Activated CD4-positive, alpha-beta T cell treated with anti-CD3 and anti-CD28 coated beads for 36 hours (primary cell): ENCODE measurements at regions of chr20 and their contacts with region 1.

Region 1: DNA sequence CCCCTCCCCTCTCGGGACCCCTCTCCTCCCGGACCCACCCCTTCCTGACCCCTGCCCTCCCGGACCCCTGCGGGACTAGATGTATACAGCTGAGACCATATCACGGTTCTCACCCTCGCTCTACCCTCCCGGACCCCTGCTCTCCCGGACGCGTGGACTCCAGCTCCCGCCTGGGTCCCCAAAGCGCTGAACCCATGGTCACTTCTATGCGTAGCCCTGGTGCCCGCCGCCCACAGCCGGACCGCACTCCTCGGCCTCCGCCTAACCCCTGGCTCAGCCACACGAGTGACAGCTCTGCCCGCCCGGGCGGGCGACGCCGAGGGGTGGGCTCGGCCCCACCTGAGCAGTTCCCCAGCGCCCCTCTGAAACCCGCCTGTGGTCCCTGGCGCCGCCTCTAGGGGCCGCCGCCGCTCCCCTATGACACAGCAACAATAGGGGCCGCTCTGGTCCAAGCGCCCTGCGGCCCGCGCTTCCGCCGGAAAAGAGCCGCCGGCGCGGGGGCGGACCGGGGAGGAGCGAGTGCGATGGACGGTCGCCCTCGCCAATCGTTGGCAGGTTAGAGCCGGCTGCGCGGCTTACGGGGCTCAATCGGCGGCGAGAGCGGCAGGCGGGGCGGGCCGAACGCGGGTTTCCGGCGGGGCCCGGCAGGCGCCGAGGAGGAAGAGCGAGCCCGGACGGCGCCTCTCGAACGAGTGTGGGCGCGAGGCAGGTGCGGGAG is at the start of gene ADRM1:
- DNase-seq: peak; percentile 98
- ATAC-seq: peak; percentile 83
- H3K4me3 Mint-ChIP-seq: peak within 1 kb of the TSS; percentile 91
- H3K27ac Mint-ChIP-seq: peak within 1 kb of the TSS; percentile 99
- H3K4me1 Mint-ChIP-seq: peaks cover 22% of the 10 kb centered on the region
- H3K27me3 Mint-ChIP-seq: no peaks in the 10 kb centered on the region
- total RNA-seq, gene ADRM1: 92.8 to 103 TPM

Region 2: GRCh38 chr20:62129731-62130531 is 172.6 kb before region 1 on chr20:
- CTCF ChIA-PET with region 1: no interaction called
- POLR2A ChIA-PET with region 1: no interaction called
- intact Hi-C with region 1: no loop called
- DNase-seq: no peak
- ATAC-seq: no peak
- H3K4me3 Mint-ChIP-seq: no peak overlapping the region
- H3K27ac Mint-ChIP-seq: no peak overlapping the region
- H3K4me1 Mint-ChIP-seq: peaks cover 23% of the 10 kb centered on the region
- H3K27me3 Mint-ChIP-seq: no peaks in the 10 kb centered on the region

Region 3: DNA sequence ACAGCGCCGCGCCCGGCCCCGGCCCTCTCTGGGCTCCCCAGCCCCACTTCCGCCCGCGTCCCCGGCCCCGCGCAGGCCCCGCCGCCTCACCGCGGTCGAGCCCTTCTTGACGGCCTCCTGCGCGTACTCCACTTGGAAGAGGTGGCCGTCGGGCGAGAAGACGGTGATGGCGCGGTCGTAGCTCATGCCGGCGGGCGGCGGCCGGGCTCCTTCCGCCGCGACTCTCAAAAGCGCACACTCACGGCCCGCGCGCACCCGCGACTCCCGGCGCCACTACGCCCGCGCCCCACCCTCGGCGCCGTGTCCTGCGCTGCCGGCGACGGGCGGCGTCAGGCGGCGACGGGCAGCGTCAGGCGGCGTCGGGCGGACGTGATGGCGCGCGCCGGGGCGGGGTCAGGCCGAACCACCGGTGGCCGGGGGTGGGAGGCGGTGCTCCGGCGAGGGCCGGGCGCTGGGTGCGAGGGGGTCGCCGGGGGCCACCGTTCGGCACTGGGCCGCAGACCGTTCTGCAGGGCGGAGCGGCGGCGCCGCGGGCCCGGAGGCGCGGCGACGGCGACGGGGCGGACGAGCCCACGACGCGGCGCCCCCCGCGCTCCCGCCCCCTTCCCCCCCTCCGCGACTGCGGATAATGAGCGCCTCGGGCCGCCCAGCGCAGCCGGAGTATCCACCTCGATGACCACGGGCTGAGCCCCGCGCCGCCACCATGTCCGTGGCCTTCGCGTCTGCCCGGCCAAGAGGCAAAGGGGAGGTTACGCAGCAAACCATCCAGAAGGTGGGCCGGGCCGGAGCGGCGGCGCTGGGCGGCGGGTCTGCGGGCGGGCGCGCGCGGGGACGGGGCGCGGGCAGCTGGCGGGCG is 159.2 kb before region 1 on chr20 and contains the starts of genes PSMA7 and SS18L1:
- CTCF ChIA-PET with region 1: no interaction called
- POLR2A ChIA-PET with region 1: no interaction called
- intact Hi-C with region 1: loop called in 1 of 2 experiments (anchors 1 kb)
- DNase-seq: peak; percentile 92
- ATAC-seq: peak; percentile 87
- H3K4me3 Mint-ChIP-seq: peak within 1 kb of the TSS; percentile 89
- H3K27ac Mint-ChIP-seq: peak within 1 kb of the TSS; percentile 91
- H3K4me1 Mint-ChIP-seq: peaks cover 61% of the 10 kb centered on the region
- H3K27me3 Mint-ChIP-seq: no peaks in the 10 kb centered on the region
- total RNA-seq, gene PSMA7: 208 to 296 TPM
- total RNA-seq, gene SS18L1: 14.3 to 16.6 TPM

Region 4: GRCh38 chr20:62326959-62327725 is 24.6 kb after region 1 on chr20:
- CTCF ChIA-PET with region 1: no interaction called
- POLR2A ChIA-PET with region 1: no interaction called
- intact Hi-C with region 1: no loop called
- DNase-seq: no peak
- ATAC-seq: no peak
- H3K4me3 Mint-ChIP-seq: no peak overlapping the region
- H3K27ac Mint-ChIP-seq: no peak overlapping the region
- H3K4me1 Mint-ChIP-seq: no peaks in the 10 kb centered on the region
- H3K27me3 Mint-ChIP-seq: no peaks in the 10 kb centered on the region

Region 5: GRCh38 chr20:62368976-62369814 is 66.7 kb after region 1 on chr20:
- CTCF ChIA-PET with region 1: interaction called, 4 read pairs
- POLR2A ChIA-PET with region 1: no interaction called
- intact Hi-C with region 1: loop called in 1 of 2 experiments (anchors 5 kb)
- DNase-seq: peak; percentile 37
- ATAC-seq: peak; percentile 9
- H3K4me3 Mint-ChIP-seq: no peak overlapping the region
- H3K27ac Mint-ChIP-seq: no peak overlapping the region
- H3K4me1 Mint-ChIP-seq: peaks cover 3% of the 10 kb centered on the region
- H3K27me3 Mint-ChIP-seq: peaks cover 19% of the 10 kb centered on the region

Region 6: DNA sequence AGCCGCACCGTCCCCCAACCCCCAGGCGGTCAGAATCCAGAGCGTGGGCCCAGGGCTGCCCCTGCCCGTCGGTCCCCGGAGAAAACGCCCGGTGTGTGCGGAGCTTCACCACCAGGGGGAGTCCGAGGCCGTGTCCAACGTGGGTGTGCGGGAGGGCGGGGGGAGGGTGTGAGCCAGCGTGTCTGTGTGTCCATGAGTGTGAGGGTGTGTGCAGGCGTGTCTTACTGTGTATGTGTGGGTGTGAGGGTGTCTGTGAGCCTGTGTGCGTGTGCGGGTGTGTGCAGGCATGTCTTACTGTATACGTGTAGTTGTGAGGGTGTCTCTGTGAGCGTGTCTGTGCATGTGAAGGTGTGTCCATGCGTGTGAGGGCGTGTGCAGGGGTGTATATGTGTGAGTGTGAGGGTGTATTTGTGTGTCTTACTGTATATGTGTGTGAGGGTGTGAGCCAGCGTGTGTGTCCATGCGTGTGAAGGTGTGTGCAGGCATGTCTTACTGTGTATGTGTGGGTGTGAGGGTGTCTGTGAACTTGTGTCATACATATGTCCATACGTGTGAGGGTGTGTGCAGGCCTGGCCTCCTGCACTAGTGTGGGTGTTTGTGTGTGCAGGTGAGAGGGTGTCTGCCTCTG is 197.9 kb after region 1 on chr20:
- CTCF ChIA-PET with region 1: no interaction called
- POLR2A ChIA-PET with region 1: no interaction called
- intact Hi-C with region 1: loop called (anchors 1 to 5 kb)
- DNase-seq: peak; percentile 91
- ATAC-seq: peak; percentile 14
- H3K4me3 Mint-ChIP-seq: no peak overlapping the region
- H3K27ac Mint-ChIP-seq: peak overlapping the region; percentile 82
- H3K4me1 Mint-ChIP-seq: peaks cover 32% of the 10 kb centered on the region
- H3K27me3 Mint-ChIP-seq: peaks cover 1% of the 10 kb centered on the region

Region 7: GRCh38 chr20:62516345-62516744 is 213.8 kb after region 1 on chr20:
- CTCF ChIA-PET with region 1: no interaction called
- POLR2A ChIA-PET with region 1: no interaction called
- intact Hi-C with region 1: no loop called
- DNase-seq: no peak
- ATAC-seq: no peak
- H3K4me3 Mint-ChIP-seq: no peak overlapping the region
- H3K27ac Mint-ChIP-seq: no peak overlapping the region
- H3K4me1 Mint-ChIP-seq: peaks cover 4% of the 10 kb centered on the region
- H3K27me3 Mint-ChIP-seq: peaks cover 19% of the 10 kb centered on the region

Region 8: DNA sequence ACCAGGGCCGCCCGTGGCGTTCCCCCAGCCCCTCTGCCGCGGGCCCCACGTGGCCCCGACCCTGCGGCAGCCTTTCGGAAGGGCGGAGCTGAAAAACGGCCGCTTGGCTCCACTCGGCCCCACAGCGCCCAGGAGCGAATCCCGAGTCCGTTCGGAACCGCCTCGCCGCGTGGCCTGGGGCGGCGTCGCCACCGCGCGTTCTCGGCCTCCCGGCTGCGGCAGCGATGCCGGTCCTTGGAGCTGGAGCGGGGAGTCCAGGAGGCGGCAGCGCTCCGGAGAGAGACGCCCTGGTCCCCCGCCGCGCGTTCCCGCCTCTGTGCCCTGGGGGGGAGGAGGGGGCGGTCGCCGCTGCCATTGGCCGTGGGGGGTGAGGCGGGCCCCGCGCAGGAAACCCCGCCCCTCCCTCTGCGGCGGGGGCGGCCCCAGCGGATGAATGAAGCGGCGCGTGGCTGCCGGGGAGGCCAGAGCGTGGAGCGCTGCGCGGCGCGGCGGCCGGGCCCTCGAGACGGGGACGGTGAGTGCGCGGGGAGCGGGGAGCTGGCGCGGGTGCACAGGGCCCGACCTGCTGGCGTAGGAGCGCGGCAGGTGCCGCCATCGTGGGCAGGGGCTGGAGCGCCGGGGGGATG is 339.7 kb after region 1 on chr20 and contains the start of gene SLCO4A1:
- CTCF ChIA-PET with region 1: no interaction called
- POLR2A ChIA-PET with region 1: no interaction called
- intact Hi-C with region 1: loop called (anchors 1 to 10 kb)
- DNase-seq: peak; percentile 93
- ATAC-seq: peak; percentile 94
- H3K4me3 Mint-ChIP-seq: peak within 1 kb of the TSS; percentile 79
- H3K27ac Mint-ChIP-seq: peak within 1 kb of the TSS; percentile 69
- H3K4me1 Mint-ChIP-seq: peaks cover 11% of the 10 kb centered on the region
- H3K27me3 Mint-ChIP-seq: peaks cover 4% of the 10 kb centered on the region
- total RNA-seq, gene SLCO4A1: 40.5 to 43.4 TPM

Region 9: GRCh38 chr20:62926239-62927104 is 624.0 kb after region 1 on chr20 and contains the start of gene DIDO1:
- CTCF ChIA-PET with region 1: no interaction called
- POLR2A ChIA-PET with region 1: no interaction called
- intact Hi-C with region 1: loop called in 1 of 2 experiments (anchors 2 kb)
- DNase-seq: peak; percentile 94
- ATAC-seq: peak; percentile 78
- H3K4me3 Mint-ChIP-seq: peak within 1 kb of the TSS; percentile 94
- H3K27ac Mint-ChIP-seq: peak within 1 kb of the TSS; percentile 96
- H3K4me1 Mint-ChIP-seq: peaks cover 64% of the 10 kb centered on the region
- H3K27me3 Mint-ChIP-seq: no peaks in the 10 kb centered on the region
- total RNA-seq, gene DIDO1: 43.7 to 49.7 TPM

Region 10: GRCh38 chr20:63272584-63273579 is 970.4 kb after region 1 on chr20 and contains the start of gene ARFGAP1:
- CTCF ChIA-PET with region 1: no interaction called
- POLR2A ChIA-PET with region 1: no interaction called
- intact Hi-C with region 1: loop called in 1 of 2 experiments (anchors 5 kb)
- DNase-seq: peak; percentile 94
- ATAC-seq: peak; percentile 99
- H3K4me3 Mint-ChIP-seq: peak within 1 kb of the TSS; percentile 79
- H3K27ac Mint-ChIP-seq: peak within 1 kb of the TSS; percentile 83
- H3K4me1 Mint-ChIP-seq: peaks cover 27% of the 10 kb centered on the region
- H3K27me3 Mint-ChIP-seq: no peaks in the 10 kb centered on the region
- total RNA-seq, gene ARFGAP1: 73.4 to 77.6 TPM